Activated naive CD4-positive, alpha-beta T cell treated with anti-CD3 and anti-CD28 coated beads for 36 hours (primary cell): ENCODE measurements at regions of chr9 and their contacts with region 1.

Region 1: DNA sequence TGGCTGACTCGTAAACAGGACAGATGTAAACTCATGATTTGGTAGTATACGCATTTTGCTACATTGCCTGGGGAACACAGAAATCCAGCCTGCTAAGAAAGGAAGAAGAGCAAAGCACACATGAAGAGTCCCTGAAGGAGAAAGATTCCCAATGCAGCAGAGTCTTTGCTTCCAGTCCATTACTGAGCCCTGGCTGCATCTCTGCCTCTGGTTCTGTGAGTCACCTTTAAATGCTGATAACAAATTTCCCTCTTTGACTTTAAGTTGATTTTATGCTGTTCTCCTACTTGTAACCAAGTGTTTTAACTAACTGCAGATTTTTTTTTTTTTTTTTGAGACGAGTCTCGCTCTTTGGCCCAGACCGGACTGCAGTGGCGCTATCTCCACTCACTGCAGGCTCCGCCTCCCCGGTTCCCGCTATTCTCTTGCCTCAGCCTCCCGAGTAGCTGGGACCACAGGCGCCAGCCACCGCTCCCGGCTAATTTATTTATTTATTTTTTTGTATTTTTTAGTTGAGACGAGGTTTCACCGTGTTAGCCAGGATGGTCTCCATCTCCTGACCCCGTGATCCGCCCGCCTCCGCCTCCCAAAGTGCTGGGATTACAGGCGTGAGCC is 8.5 kb upstream of the PRXL2C start:
- DNase-seq: no peak
- H3K4me3 Mint-ChIP-seq: no peak overlapping the region
- H3K27ac Mint-ChIP-seq: no peak overlapping the region
- H3K4me1 Mint-ChIP-seq: no peaks in the 10 kb centered on the region
- H3K27me3 Mint-ChIP-seq: peaks cover 3% of the 10 kb centered on the region

Region 2: GRCh38 chr9:96327694-96328352 is 335.8 kb before region 1 on chr9:
- CTCF ChIA-PET with region 1: interaction called, 28 read pairs
- intact Hi-C with region 1: loop called (anchors 1 kb)
- DNase-seq: peak; percentile 70
- H3K4me3 Mint-ChIP-seq: no peak overlapping the region
- H3K27ac Mint-ChIP-seq: no peak overlapping the region
- H3K4me1 Mint-ChIP-seq: no peaks in the 10 kb centered on the region
- H3K27me3 Mint-ChIP-seq: no peaks in the 10 kb centered on the region